Dendritic cell treated with granulocyte-macrophage colony-stimulating factor and Interleukin-4, amounts not matched to agents 40 ng/mL and 50 ng/mL, for 4 days (primary cell): ENCODE measurements at regions of chr14 and their contacts with region 1.

Region 1: DNA sequence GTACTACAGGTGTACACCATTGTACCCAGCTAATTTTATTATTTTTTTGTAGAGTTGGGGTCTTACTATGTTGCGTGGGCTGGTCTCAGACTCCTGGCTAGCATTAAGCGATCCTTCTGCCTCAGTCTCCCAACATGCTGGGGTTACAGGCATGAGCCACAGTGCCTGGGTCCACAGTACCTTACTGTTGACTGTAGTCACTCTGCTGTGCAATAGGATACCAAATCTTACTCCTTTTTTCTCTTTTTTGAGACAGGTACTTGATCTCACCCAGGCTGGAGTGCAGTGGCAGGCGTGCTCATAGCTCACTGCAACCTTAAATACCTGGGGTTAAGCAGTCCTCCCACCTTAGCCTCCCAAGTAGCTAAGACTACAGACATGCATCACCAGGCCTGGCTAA is 25.6 kb downstream of the PSMA6 start:
- H3K4me3 Mint-ChIP-seq: no peak overlapping the region
- H3K27ac Mint-ChIP-seq: no peak overlapping the region
- H3K4me1 Mint-ChIP-seq: peaks cover 9% of the 10 kb centered on the region
- H3K27me3 Mint-ChIP-seq: no peaks in the 10 kb centered on the region

Region 2: DNA sequence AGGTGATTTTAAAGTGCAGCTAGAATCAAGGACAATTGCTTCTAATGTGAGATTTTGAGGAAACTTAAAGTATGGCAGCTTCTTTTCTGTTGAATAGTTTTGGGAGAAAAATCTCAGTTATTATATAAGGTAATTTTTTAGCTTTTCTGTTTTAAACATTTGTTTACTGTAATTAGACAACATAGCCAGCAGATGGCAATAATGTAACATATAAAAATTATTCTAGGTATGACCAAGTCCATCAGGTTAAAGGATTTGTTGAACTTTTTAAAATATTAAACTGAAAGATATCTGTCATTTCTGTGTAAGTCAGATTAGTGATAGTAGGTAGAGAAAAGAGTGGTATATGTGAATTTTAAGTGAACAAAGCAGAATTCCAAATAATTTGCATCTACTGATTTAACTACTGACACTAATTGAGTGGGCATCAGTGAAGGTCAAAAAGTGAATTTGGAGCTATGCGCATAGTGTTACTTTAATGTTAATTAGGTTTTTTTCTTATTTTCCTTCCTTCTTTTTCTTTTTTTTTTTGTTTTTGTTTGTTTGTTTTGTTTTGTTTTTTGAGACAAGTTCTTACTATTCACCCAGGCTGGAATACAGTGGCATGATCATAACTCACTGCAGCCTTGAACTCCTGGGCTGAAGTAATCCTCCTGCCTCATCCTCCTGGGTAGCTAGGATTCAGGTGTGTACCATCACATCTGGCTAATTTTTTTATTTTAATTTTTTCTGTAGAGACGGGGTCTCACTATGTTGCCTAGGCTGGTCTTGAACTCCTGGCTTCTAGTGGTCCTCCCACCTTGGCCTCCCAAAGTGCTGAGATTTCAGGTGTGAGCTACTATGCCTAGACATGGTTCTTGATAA is 176.9 kb before region 1 on chr14:
- intact Hi-C with region 1: loop called (anchors 10 kb)
- H3K4me3 Mint-ChIP-seq: no peak overlapping the region
- H3K27ac Mint-ChIP-seq: no peak overlapping the region
- H3K4me1 Mint-ChIP-seq: peaks cover 7% of the 10 kb centered on the region
- H3K27me3 Mint-ChIP-seq: no peaks in the 10 kb centered on the region

Region 3: DNA sequence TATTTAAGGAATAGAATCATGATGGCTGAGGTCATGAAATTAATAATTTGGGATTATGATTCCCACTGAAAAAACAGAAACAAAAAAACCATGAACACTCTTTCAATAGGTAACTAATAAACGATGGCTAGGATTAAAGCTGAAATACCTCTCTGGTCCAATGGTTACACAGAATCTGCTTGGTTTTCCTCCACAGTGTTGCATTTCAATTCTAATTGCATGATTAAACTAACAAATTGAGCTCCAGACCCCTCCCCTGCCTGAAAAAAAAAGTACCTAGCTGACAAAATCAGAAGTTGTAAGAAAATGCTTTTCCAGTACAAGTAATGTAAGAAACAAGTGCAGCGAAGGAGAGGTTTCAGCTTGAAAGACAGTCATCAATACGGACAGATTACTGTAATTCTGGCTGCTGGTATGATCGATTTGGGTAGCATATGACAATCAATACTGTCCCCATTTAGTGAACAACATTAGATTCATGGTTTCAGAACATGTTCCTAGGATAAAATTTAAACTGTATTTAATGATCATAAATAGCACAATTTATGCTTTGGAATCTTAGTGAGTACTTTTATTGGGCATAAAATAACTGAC is 248.1 kb after region 1 on chr14:
- intact Hi-C with region 1: no loop called
- H3K4me3 Mint-ChIP-seq: no peak overlapping the region
- H3K27ac Mint-ChIP-seq: no peak overlapping the region
- H3K4me1 Mint-ChIP-seq: no peaks in the 10 kb centered on the region
- H3K27me3 Mint-ChIP-seq: no peaks in the 10 kb centered on the region